ENCODE measurements at regions of chr7 and their contacts with region 1.

Region 1: DNA sequence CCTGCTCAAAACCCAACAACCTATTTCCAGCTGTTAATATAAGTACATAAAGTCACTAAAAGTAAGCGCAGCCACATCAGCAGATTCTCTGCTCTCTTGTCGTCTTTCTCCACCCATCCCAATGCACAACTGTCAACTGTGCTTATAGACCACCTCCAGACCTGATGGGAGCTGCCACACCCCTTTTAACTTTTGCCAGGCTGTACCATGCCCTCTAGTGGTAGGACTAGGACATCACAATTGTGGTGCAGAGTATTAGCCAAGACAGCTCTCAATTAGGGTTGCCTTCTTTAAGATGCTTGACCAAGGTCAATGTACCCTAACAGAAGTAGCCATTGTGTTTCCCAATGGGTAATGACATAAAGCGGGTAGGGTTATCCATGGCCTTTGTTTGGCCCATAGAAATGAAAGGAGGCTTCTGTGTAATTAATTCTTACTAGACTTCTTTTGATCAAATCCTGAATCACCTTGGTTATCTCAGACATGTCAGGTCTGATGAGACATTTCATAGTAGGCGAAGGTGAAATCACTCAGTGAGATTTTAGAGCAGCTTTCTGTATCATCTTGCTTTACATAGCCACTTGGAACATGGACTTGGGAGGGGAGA is 68.1 kb downstream of the SCRN1 start:
- DNase-seq: peak; percentile 67 to 80 (median 78)
- ATAC-seq: peak; percentile 95
- H3K4me3 ChIP-seq: no peak overlapping the region
- H3K27ac ChIP-seq: no peak overlapping the region
- H3K4me1 ChIP-seq: peaks cover 2 to 7% of the 10 kb centered on the region in 2 experiments; a peak in 3 of 5 replicates
- H3K27me3 ChIP-seq: peaks cover 6 to 19% of the 10 kb centered on the region in 2 experiments; a peak in 2 of 5 replicates
- CTCF ChIP-seq: peak; percentile 91 to 93 (median 91)
- EP300 ChIP-seq: no peak
- POLR2A ChIP-seq: no peak
- RAD21 ChIP-seq: peak; percentile 83 to 96

Region 2: DNA sequence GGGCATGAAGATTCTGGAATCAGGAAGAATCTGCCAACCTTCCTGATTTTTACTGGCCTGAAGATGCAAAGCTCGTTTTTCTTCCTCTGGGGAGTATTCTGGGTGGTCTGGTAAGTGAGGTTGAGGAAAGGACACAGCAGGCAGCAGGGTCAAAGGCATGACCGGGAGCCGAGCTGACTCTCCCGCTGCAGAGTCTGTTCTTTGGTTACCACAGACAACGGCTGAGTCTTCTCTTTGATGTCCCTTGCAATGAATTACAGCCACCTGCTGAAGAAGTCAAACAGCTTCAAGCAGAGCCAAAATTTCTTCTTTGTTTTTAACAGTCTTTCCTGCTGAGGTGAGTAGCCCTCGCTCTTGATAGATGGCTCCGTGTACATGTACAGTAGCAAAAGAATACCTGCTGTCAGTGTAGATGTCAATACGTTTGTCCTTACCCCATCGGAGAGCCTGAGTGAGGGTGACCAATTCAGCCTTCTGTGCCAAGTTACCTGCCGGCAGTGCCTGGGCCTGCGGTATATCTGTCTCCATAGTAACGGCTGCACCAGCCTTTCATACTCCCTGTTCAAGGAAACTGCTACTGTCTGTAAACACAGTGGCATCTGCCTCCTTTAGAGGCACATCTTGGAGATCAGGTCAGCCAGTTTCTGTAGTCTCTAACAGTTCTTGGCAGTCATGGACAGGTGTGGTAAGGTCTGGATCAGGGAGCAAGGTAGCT is 281.5 kb before region 1 on chr7:
- CTCF ChIA-PET with region 1: interaction called, 3 read pairs
- POLR2A ChIA-PET with region 1: no interaction called
- in situ Hi-C with region 1: loop called (anchors 10 kb)
- intact Hi-C with region 1: loop called (anchors 1 kb)
- DNase-seq: no peak
- ATAC-seq: no peak
- H3K4me3 ChIP-seq: no peak overlapping the region
- H3K27ac ChIP-seq: no peak overlapping the region
- H3K4me1 ChIP-seq: peaks cover 0 to 5% of the 10 kb centered on the region in 2 experiments; a peak in 1 of 5 replicates
- H3K27me3 ChIP-seq: no peaks in the 10 kb centered on the region
- CTCF ChIP-seq: no peak
- EP300 ChIP-seq: no peak
- POLR2A ChIP-seq: no peak
- RAD21 ChIP-seq: no peak

Region 3: GRCh38 chr7:29748286-29749108 is 173.0 kb before region 1 on chr7:
- CTCF ChIA-PET with region 1: interaction called, 4 read pairs
- POLR2A ChIA-PET with region 1: interaction called, 4 read pairs
- in situ Hi-C with region 1: no loop called
- intact Hi-C with region 1: loop called (anchors 1 kb)
- DNase-seq: peak in 1 of 4 experiments; percentile 73
- ATAC-seq: peak; percentile 77
- H3K4me3 ChIP-seq: no peak overlapping the region
- H3K27ac ChIP-seq: no peak overlapping the region
- H3K4me1 ChIP-seq: peaks cover 6 to 15% of the 10 kb centered on the region in 2 experiments; a peak in 2 of 5 replicates
- H3K27me3 ChIP-seq: no peaks in the 10 kb centered on the region; a peak in 2 of 5 replicates
- CTCF ChIP-seq: peak; percentile 59 to 72 (median 70)
- EP300 ChIP-seq: no peak
- POLR2A ChIP-seq: no peak
- RAD21 ChIP-seq: peak; percentile 66 to 86

Region 4: DNA sequence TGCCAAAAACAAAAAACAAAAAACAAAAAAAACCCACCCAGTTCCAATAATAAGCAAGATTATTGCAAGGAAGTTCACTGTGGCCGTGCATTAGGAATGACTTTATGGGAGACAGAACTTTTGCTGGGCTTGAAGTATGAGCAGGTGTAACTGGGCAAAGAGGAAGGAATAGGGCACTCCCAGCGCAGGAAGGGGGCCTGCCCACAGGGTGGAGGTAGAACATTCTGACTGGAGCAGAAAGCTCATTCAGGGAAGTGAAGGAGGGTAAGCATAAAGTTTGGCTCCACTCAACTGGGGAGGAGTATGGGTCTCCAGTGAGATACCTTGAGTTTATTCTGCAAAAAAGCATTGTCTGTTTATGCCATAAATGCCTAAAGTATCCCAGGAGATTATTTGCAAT is 157.3 kb before region 1 on chr7:
- CTCF ChIA-PET with region 1: no interaction called
- POLR2A ChIA-PET with region 1: no interaction called
- in situ Hi-C with region 1: no loop called
- intact Hi-C with region 1: loop called (anchors 1 kb)
- DNase-seq: peak in 2 of 4 experiments; percentile 33 to 34
- ATAC-seq: peak; percentile 87
- H3K4me3 ChIP-seq: no peak overlapping the region
- H3K27ac ChIP-seq: no peak overlapping the region
- H3K4me1 ChIP-seq: no peaks in the 10 kb centered on the region
- H3K27me3 ChIP-seq: peaks cover 0 to 4% of the 10 kb centered on the region in 2 experiments; a peak in 3 of 5 replicates
- CTCF ChIP-seq: peak; percentile 56 to 69 (median 61)
- EP300 ChIP-seq: no peak
- POLR2A ChIP-seq: no peak
- RAD21 ChIP-seq: peak; percentile 57 to 82

Region 5: DNA sequence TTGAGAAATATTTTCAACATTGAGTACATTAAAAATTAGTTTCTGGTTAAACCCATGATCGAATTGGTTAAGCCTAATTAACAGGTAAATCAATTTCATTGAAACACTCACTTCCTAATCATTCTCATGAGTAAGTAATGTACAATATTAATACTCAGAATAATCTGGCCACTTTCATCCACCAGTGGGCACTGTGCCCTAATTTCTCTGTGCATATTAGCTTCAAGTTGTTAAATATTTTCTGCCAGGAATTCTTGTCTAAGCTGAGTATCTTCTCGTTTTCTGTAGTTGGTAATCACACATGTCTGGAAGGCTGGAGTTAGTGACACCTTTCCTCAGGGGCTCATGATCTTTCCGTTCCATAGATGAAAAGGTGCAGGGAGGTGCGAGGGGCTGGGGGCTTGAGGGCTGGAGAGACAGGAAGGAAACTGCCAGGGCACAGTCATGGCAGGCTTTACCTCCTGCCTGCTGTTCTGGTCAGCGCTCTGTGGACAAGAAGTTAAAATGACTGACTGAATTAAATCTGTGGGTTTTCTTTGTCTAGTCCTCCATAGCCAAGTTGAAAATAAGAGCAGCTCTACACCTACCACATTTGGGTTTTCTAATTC is 43.3 kb before region 1 on chr7:
- CTCF ChIA-PET with region 1: interaction called, 7 read pairs
- POLR2A ChIA-PET with region 1: interaction called, 3 read pairs
- in situ Hi-C with region 1: no loop called
- intact Hi-C with region 1: loop called (anchors 2 kb)
- DNase-seq: peak; percentile 20 to 39 (median 30)
- ATAC-seq: peak; percentile 58; the same call in 2 of the 3 replicates
- H3K4me3 ChIP-seq: no peak overlapping the region
- H3K27ac ChIP-seq: no peak overlapping the region
- H3K4me1 ChIP-seq: peaks cover 0 to 3% of the 10 kb centered on the region in 2 experiments; a peak in 1 of 5 replicates
- H3K27me3 ChIP-seq: no peaks in the 10 kb centered on the region
- CTCF ChIP-seq: peak; percentile 46 to 75 (median 50); a peak in 4 of 6 replicates
- EP300 ChIP-seq: no peak
- POLR2A ChIP-seq: no peak
- RAD21 ChIP-seq: peak; percentile 61 to 76